ENCODE measurements at regions of chr6 and their contacts with region 1.

Region 1: GRCh38 chr6:105780146-105780860 is 305.8 kb upstream of the PRDM1 start:
- DNase-seq: no peak
- H3K4me3 Mint-ChIP-seq: no peak overlapping the region
- H3K27ac Mint-ChIP-seq: no peak overlapping the region
- H3K4me1 Mint-ChIP-seq: peaks cover 44% of the 10 kb centered on the region
- H3K27me3 Mint-ChIP-seq: no peaks in the 10 kb centered on the region

Region 2: DNA sequence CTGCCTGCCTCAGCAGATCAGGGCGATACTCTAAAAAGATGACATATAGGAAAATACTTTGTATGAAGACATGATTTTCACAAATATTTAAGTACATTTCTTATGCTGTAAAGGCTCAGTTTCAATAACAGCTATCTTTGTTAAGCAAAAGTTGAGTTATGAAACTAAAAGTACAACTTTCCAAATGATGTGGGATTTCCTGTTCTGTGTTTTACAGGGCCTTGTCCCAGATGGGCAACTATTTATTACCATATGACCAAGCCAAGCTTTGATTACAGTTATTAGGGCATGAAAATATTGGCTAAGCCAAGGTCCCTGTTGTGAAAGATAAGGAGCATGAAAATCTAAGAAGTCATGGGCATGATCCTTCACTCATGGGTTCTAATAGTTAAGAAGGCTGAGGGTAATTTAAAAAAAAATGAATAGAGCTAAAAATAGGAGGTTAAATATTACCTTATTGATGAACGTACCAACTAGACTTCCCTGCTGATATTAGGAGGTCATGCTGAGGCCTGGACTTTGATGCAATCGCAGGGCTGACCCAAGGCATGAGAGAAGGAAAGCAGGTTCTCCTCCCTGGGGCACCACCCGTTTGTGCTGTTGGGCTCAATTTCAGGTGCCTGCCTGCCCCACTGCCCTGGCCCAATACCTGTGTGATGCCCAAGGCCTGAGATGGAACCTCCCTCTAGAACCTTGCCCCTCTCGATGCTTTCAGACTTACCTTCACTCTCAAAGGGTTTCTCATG is 11.5 kb after region 1 on chr6:
- CTCF ChIA-PET with region 1: interaction called, 11 read pairs
- POLR2A ChIA-PET with region 1: interaction called, 6 read pairs
- DNase-seq: no peak
- H3K4me3 Mint-ChIP-seq: no peak overlapping the region
- H3K27ac Mint-ChIP-seq: peak overlapping the region; percentile 74
- H3K4me1 Mint-ChIP-seq: peaks cover 91% of the 10 kb centered on the region
- H3K27me3 Mint-ChIP-seq: no peaks in the 10 kb centered on the region

Measured in activated CD4-positive, alpha-beta memory T cell treated with anti-CD3 and anti-CD28 coated beads, Interleukin-2, amount 10 ng/mL, durations not matched to agents 7 days and 5 days (primary cell).